Aorta (tissue), 5 donors: ENCODE measurements at regions of chr15 and their contacts with region 1.

Region 1: DNA sequence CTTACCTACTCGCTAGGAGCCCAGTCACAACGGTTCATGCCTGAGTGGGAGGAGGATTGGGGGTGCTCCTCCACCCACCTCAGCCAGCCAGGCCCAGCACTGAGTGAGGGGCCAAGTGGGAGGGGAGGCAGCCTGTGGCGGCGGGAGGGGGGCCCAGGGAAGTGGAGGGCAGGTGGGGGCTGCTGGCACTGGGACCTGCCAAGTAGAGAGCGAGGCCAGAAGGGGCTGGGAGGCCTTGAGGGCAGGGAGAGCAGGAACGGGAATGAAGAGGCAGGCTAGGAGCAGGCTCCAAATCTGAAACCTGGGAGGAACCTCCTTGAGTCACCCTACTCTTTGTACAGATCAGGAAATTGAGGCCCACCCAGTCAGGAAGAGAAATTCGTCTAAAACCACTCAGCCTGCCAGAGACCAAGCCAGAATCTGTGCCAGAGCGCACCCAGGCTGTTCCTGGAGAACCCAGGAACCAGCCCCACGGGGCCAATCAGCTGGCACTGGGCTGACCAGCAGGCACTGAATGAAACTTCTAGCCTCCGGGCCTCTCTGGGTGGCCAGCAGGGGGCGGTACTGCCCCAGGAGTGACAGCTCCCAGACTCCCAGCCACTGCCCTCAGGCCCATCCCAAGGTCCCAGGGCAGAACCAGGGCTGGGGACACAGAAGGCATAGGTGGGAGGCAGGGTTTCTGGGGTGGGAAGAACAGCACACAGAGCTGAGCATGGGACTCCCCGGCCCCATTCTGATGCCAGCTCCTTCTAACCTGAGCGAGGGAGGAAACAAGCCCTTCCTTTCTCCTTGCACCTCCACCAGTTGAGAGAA is 14.8 kb upstream of the CYP11A1 start:
- DNase-seq: peak; percentile 91 to 94
- ATAC-seq: peak; percentile 82
- H3K4me3 ChIP-seq: no peak overlapping the region
- H3K27ac ChIP-seq: no peak overlapping the region
- H3K4me1 ChIP-seq: no peaks in the 10 kb centered on the region
- H3K27me3 ChIP-seq: no peaks in the 10 kb centered on the region

Region 2: GRCh38 chr15:73851689-73852088 is 530.5 kb before region 1 on chr15:
- intact Hi-C with region 1: no loop called
- DNase-seq: no peak
- ATAC-seq: no peak
- H3K4me3 ChIP-seq: no peak overlapping the region
- H3K27ac ChIP-seq: no peak overlapping the region
- H3K4me1 ChIP-seq: no peaks in the 10 kb centered on the region
- H3K27me3 ChIP-seq: no peaks in the 10 kb centered on the region

Region 3: DNA sequence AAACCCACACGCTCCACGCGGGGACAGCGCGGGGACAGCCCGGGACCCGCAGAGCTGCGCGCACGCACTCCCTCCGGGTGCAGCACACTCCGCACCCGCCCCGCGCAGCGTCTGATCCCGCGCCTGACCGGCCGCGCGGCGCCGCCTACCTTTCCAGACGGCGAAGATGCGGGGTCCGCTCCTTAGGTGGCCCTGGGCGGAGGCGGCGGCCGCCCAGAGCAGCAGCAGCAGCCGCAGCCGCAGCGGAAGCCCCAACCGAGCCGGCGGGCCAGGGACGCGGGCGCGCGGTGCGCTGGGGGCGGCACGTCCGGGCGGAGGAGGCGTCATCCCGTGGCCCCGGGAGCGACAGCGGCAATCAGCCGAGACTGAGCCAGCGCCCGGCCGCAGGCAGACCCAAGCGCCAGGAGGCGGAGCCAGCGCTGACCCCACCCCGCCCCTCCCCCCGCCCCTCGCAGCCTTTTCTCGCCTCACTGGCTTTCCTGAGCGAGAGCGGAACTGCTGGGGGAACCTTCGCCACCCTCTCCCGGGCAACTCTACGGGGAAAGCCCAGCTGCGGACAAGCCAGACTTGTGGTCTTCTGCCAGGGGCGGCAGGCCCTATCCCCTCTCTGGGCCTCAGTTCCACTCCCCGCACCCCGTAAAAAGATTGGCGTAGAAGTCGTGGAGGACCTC is 51.5 kb after region 1 on chr15 and contains the start of gene SEMA7A:
- intact Hi-C with region 1: loop called (anchors 1 to 2 kb)
- DNase-seq: peak; percentile 90 to 93
- ATAC-seq: peak; percentile 89
- H3K4me3 ChIP-seq: peak within 1 kb of the TSS; percentile 52 to 68
- H3K27ac ChIP-seq: no peak within 1 kb of the TSS
- H3K4me1 ChIP-seq: no peaks in the 10 kb centered on the region
- H3K27me3 ChIP-seq: no peaks in the 10 kb centered on the region
- total RNA-seq, gene SEMA7A: 2.3 to 4.1 TPM

Region 4: DNA sequence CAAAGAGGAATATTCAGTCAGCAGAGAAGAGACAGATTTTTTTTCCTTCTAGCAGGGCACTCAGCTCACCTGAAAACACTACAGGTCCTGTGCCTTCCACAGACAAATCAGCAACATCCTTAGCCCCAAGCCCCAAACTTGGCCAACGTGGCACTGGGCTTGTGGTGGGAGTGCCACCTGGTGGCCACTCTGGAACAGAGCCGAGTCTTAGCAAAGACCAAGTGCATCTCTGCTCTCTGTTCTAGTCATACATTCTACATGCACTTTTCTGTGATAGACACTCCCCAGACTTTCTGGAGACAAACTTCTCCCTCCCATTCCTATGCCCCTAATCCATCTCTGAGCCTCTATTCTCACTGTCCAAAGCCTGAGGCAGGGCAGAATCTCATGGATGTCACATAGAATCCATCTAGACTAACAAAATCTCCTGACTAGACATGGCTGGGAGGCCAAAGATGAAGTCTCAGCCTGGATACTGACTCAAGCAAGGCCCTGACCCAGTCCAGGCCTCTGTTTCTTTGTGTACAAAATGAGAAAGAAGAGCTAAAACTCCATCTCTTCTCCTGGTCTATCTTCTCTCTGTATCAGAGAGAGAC is 56.6 kb after region 1 on chr15:
- intact Hi-C with region 1: loop called (anchors 1 to 2 kb)
- DNase-seq: peak; percentile 80 to 86
- ATAC-seq: peak; percentile 73
- H3K4me3 ChIP-seq: no peak overlapping the region
- H3K27ac ChIP-seq: no peak overlapping the region
- H3K4me1 ChIP-seq: no peaks in the 10 kb centered on the region
- H3K27me3 ChIP-seq: no peaks in the 10 kb centered on the region